AG04449 (cell line): ENCODE measurements at regions of chr17 and their contacts with region 1.

Region 1: DNA sequence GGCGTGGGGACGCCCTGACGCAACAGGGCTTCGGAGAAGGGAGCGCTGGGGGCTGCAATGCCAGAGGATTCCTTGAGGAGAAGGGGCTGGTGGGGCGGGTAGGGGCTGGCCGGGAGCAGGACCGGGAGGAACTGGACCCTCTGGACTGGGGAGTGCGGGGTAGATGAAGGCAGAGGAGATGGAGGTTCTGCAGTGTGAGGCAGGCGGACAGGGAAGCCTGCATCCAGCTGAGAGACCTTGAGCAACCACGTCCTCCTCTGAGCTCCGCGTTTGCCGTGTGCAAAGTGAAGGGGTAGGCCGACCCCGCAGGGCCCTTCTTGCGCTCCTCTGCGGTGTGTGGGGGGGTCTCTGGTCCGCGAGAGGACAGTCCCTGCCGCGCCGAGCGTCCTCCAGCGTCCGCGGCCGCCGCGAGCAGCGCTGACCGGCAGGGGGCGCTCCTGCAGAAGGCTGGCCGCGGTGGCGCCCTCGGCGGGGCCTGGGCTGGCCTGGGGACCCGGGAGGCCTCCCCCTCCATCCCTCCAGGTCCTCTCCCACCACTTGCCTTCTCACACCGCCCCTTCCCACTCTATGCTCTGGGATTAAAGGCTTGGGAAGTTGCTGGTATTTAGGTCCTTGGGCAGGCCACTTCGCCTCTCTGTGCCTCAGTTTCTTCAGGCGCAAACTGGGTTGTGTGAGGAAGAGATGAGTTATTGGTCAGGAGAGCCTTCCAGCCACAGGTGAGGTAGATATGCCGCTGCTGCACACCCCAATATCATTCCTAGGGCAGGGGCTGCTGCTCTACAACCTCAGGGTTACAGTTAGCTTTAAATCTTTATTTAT is 9.6 kb upstream of the WNT9B start:
- DNase-seq: no peak
- H3K4me3 ChIP-seq: peak overlapping the region; percentile 37
- CTCF ChIP-seq: peak; percentile 69

Region 2: GRCh38 chr17:46745376-46745775 is 96.4 kb before region 1 on chr17:
- CTCF ChIA-PET with region 1: no interaction called
- POLR2A ChIA-PET with region 1: no interaction called
- DNase-seq: no peak
- H3K4me3 ChIP-seq: no peak overlapping the region
- CTCF ChIP-seq: no peak

Region 3: GRCh38 chr17:46811978-46812583 is 29.7 kb before region 1 on chr17:
- CTCF ChIA-PET with region 1: interaction called, 16 read pairs
- POLR2A ChIA-PET with region 1: no interaction called
- DNase-seq: peak; percentile 50
- H3K4me3 ChIP-seq: no peak overlapping the region
- CTCF ChIP-seq: no peak

Region 4: DNA sequence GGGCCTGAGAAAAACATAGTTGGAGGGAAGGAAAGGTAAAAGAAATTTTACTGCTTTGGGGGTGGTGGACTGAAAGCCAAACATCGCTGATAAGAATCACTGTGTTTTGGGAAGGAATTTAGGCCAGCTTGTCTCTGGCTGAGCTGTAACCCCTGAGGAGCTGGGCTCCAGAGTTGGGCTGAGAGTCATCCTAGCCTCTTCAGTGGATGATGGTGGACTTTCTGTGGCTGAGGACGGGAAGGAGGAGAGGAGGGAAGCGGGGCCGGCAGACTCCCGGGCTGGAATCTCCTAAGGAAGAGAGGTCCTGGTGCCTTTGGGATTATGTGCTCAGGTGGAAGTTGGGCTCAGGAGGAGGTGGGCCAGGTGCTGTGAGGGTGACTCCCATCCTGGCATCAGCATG is 18.2 kb after region 1 on chr17:
- CTCF ChIA-PET with region 1: interaction called, 26 read pairs
- POLR2A ChIA-PET with region 1: no interaction called
- DNase-seq: no peak
- H3K4me3 ChIP-seq: no peak overlapping the region
- CTCF ChIP-seq: no peak

Region 5: DNA sequence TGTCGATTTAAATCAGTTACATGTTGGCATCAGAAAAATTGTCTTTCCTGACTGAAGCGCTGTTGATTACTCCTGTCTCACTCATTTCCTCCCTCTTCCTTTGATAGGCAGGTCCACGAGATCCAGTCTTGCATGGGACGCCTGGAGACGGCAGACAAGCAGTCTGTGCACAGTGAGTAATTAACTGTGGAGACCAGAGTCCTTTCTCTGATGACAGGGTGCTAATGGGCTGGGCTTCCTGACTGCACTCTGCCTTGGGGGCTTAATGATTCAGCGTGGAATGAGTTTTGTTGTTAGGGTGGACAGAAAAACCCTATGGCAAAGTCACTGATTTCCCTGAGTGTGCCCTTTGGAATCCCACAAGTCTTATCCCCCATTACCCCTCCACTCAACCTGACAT is 87.6 kb after region 1 on chr17:
- CTCF ChIA-PET with region 1: interaction called, 11 read pairs
- POLR2A ChIA-PET with region 1: no interaction called
- DNase-seq: no peak
- H3K4me3 ChIP-seq: no peak overlapping the region
- CTCF ChIP-seq: no peak